Activated CD8-positive, alpha-beta T cell treated with anti-CD3 and anti-CD28 coated beads, Interleukin-2, amount 10 ng/mL, durations not matched to agents 7 days and 5 days (primary cell): ENCODE measurements at regions of chr2 and their contacts with region 1.

Region 1: DNA sequence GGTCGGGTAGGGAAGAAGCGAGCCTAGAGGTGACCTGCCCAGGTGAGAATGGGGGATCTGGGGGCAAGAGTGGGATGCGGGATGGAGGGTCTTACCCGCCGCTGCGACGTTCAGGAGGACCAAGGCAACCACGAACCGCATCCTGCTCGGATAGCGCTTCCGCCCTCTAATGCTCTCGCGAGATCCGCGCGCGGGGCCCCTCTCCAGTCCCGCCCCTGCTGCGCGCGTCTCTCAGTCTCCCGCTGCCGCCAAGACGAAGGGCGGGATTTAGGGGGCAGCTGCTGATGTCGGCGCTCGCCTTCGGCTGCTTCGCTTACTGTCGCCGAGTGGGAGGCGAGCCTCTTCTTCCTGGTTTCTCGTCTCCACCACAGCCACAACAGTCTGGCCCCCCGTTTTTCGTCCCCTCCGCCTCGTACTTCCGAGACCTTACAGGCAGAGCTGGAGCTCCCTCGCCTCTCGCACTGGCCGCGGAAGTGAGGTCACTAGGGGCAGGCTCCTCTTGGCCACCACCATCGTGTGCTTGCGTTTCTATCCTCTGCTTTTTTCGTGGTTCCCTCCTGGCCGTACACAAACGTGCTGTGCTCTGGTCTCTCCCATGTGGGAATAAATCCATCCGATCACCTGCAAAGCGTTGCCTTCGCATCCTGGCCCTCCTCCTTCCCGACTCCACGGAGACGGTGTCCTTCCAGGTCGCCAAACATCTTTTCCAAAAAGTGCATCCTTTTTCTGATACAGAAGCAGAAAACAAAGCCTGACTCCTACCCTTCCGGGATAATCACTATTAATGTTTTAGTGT is at the start of gene TGOLN2:
- DNase-seq: peak; percentile 96
- ATAC-seq: peak; percentile 86
- H3K4me3 Mint-ChIP-seq: peak within 1 kb of the TSS; percentile 97
- H3K27ac Mint-ChIP-seq: peak within 1 kb of the TSS; percentile 100
- H3K4me1 Mint-ChIP-seq: peaks cover 34% of the 10 kb centered on the region
- H3K27me3 Mint-ChIP-seq: no peaks in the 10 kb centered on the region
- total RNA-seq, gene TGOLN2: 100 to 102 TPM

Region 2: GRCh38 chr2:84939426-84940087 is 388.5 kb before region 1 on chr2:
- CTCF ChIA-PET with region 1: no interaction called
- POLR2A ChIA-PET with region 1: interaction called, 10 read pairs
- DNase-seq: peak; percentile 93
- ATAC-seq: peak; percentile 89
- H3K4me3 Mint-ChIP-seq: peak overlapping the region; percentile 69
- H3K27ac Mint-ChIP-seq: peak overlapping the region; percentile 96
- H3K4me1 Mint-ChIP-seq: peaks cover 65% of the 10 kb centered on the region
- H3K27me3 Mint-ChIP-seq: no peaks in the 10 kb centered on the region

Region 3: GRCh38 chr2:85302121-85302520 is 25.9 kb before region 1 on chr2:
- CTCF ChIA-PET with region 1: interaction called, 15 read pairs
- POLR2A ChIA-PET with region 1: interaction called, 10 read pairs
- DNase-seq: no peak
- ATAC-seq: no peak
- H3K4me3 Mint-ChIP-seq: no peak overlapping the region
- H3K27ac Mint-ChIP-seq: no peak overlapping the region
- H3K4me1 Mint-ChIP-seq: peaks cover 7% of the 10 kb centered on the region
- H3K27me3 Mint-ChIP-seq: peaks cover 15% of the 10 kb centered on the region

Region 4: GRCh38 chr2:85308896-85309555 is 19.0 kb before region 1 on chr2:
- CTCF ChIA-PET with region 1: interaction called, 4 read pairs
- POLR2A ChIA-PET with region 1: interaction called, 26 read pairs
- DNase-seq: no peak
- ATAC-seq: peak; percentile 12
- H3K4me3 Mint-ChIP-seq: peak overlapping the region; percentile 62
- H3K27ac Mint-ChIP-seq: peak overlapping the region; percentile 78
- H3K4me1 Mint-ChIP-seq: peaks cover 39% of the 10 kb centered on the region
- H3K27me3 Mint-ChIP-seq: peaks cover 4% of the 10 kb centered on the region

Region 5: DNA sequence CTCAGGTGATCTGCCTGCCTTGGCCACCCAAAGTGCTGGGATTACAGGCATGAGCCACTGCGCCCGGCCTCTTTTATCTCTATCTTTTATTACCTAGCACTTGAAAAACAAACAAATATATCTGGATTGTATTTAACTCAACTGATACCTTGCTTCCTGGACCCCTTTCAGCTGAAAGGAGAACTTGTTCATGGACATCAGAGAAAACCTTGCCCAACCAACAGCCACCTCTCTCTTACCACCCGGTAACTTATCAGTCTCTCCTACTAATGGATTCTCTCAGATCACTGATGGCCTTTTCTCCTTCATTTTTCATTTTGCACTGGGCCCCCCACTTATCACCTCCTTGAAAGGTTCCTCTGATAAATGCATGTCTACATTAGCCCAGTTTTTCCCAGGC is 19.6 kb after region 1 on chr2:
- CTCF ChIA-PET with region 1: no interaction called
- POLR2A ChIA-PET with region 1: interaction called, 14 read pairs
- DNase-seq: no peak
- ATAC-seq: no peak
- H3K4me3 Mint-ChIP-seq: no peak overlapping the region
- H3K27ac Mint-ChIP-seq: no peak overlapping the region
- H3K4me1 Mint-ChIP-seq: peaks cover 7% of the 10 kb centered on the region
- H3K27me3 Mint-ChIP-seq: no peaks in the 10 kb centered on the region

Region 6: GRCh38 chr2:85354286-85355072 is 26.5 kb after region 1 on chr2 and contains the starts of genes ELMOD3 and RETSAT:
- CTCF ChIA-PET with region 1: interaction called, 12 read pairs
- POLR2A ChIA-PET with region 1: interaction called, 54 read pairs
- DNase-seq: peak; percentile 99
- ATAC-seq: peak; percentile 100
- H3K4me3 Mint-ChIP-seq: peak within 1 kb of the TSS; percentile 99
- H3K27ac Mint-ChIP-seq: peak within 1 kb of the TSS; percentile 99
- H3K4me1 Mint-ChIP-seq: peaks cover 47% of the 10 kb centered on the region
- H3K27me3 Mint-ChIP-seq: no peaks in the 10 kb centered on the region
- total RNA-seq, gene ELMOD3: 14.4 to 19.9 TPM
- total RNA-seq, gene RETSAT: 27.8 to 28.4 TPM

Region 7: GRCh38 chr2:85538486-85539360 is 210.7 kb after region 1 on chr2 and contains the start of gene MAT2A:
- CTCF ChIA-PET with region 1: no interaction called
- POLR2A ChIA-PET with region 1: interaction called, 33 read pairs
- DNase-seq: peak; percentile 88
- ATAC-seq: peak; percentile 71
- H3K4me3 Mint-ChIP-seq: peak within 1 kb of the TSS; percentile 96
- H3K27ac Mint-ChIP-seq: peak within 1 kb of the TSS; percentile 98
- H3K4me1 Mint-ChIP-seq: peaks cover 51% of the 10 kb centered on the region
- H3K27me3 Mint-ChIP-seq: no peaks in the 10 kb centered on the region
- total RNA-seq, gene MAT2A: 264 to 273 TPM